ENCODE measurements at regions of chr4 and their contacts with region 1.

Region 1: DNA sequence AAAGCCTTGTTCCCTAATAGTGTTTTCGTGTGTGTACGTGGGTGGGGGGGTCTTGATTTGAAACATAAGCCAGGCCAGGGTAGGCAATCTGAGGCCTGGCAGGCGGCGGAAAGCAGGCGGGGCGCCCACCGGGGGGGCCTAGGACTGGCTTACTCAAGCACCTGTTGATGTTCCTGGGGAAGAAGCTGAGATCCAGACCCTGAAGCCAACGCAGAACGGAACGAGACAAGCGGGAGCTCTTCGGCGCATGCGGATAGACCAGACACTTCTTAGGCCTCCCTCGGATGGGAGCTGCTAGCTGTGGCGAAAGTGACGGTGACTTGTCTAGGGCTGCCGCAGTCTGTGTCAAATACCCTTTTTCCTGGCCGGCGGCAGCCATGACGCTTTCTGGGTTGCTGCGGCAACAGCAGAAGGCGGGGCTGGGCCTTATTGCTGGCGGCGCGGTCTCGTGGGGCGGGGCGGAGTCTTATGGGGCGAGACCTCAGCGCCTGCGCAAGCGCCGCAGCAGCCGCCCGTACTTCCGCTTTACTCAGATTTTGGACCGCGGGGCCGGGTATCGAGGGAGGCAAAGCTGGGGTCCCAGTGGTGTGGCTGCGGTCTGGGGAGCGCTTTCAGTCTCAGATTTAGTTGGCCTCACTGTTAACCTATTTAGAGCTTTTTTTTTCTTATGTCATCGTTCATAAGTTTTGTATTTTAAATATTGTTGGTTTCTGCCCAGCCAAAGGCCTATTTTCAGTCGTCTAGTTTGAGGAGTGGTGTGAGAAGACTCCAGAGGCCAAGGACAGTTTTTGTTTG is at the start of gene SPATA4:
- DNase-seq: peak; percentile 96
- H3K4me3 Mint-ChIP-seq: peak within 1 kb of the TSS; percentile 76
- H3K27ac Mint-ChIP-seq: peak within 1 kb of the TSS; percentile 75
- H3K4me1 Mint-ChIP-seq: peaks cover 32% of the 10 kb centered on the region
- H3K27me3 Mint-ChIP-seq: peaks cover 12% of the 10 kb centered on the region
- total RNA-seq, gene SPATA4: not detected

Region 2: DNA sequence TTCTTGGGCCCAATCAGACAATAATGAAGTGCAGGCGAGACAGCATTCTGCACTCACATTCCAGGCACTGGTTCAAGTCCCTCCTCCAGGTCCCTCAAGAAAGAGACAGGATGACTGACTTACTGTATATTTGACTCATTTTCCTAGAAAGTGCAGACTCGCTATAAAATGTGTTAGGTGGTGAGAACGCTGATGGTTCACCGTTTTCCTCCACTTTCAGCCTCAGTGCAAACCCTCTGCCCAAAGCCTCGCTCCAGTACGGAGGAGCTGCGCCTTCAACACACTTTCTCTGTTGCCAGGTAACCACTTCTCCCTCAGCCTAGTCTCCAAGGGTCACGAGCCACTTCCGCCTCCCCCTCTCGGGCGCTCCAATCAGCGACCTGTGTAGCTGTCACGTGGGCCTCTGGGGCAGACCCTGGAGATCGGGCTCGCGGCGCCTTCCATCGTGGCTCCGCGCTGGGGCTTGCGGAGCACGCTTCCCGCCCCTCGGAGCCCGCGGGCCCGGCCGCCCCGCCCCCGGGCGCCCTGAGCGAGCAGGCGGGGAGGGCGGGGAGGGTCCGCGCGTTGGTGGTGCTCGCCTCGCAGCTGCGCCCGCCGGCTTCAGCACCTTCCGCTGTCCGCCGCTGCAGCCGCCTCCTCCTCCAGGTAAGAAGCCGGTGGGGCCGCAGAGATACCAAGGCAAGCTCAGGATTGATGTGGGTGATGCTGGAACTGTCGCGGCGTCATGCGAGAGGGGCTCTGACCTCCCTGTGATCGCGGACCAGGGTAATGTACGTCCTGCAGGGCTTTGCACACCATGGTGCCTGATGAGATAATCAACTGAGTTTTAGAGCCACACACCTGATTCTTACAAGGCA is 129.7 kb before region 1 on chr4 and contains the start of gene WDR17:
- CTCF ChIA-PET with region 1: no interaction called
- intact Hi-C with region 1: loop called (anchors 1 kb)
- DNase-seq: peak; percentile 80
- H3K4me3 Mint-ChIP-seq: peak within 1 kb of the TSS; percentile 86
- H3K27ac Mint-ChIP-seq: no peak within 1 kb of the TSS
- H3K4me1 Mint-ChIP-seq: peaks cover 11% of the 10 kb centered on the region
- H3K27me3 Mint-ChIP-seq: peaks cover 20% of the 10 kb centered on the region
- total RNA-seq, gene WDR17: 1.4 to 1.7 TPM

Region 3: GRCh38 chr4:176150356-176150682 is 45.1 kb before region 1 on chr4:
- CTCF ChIA-PET with region 1: no interaction called
- intact Hi-C with region 1: loop called (anchors 1 kb)
- DNase-seq: peak; percentile 6
- H3K4me3 Mint-ChIP-seq: no peak overlapping the region
- H3K27ac Mint-ChIP-seq: no peak overlapping the region
- H3K4me1 Mint-ChIP-seq: no peaks in the 10 kb centered on the region
- H3K27me3 Mint-ChIP-seq: no peaks in the 10 kb centered on the region

Region 4: GRCh38 chr4:176492646-176493302 is 297.4 kb after region 1 on chr4:
- CTCF ChIA-PET with region 1: no interaction called
- intact Hi-C with region 1: loop called (anchors 5 kb)
- DNase-seq: no peak
- H3K4me3 Mint-ChIP-seq: no peak overlapping the region
- H3K27ac Mint-ChIP-seq: no peak overlapping the region
- H3K4me1 Mint-ChIP-seq: peaks cover 5% of the 10 kb centered on the region
- H3K27me3 Mint-ChIP-seq: no peaks in the 10 kb centered on the region

Region 5: DNA sequence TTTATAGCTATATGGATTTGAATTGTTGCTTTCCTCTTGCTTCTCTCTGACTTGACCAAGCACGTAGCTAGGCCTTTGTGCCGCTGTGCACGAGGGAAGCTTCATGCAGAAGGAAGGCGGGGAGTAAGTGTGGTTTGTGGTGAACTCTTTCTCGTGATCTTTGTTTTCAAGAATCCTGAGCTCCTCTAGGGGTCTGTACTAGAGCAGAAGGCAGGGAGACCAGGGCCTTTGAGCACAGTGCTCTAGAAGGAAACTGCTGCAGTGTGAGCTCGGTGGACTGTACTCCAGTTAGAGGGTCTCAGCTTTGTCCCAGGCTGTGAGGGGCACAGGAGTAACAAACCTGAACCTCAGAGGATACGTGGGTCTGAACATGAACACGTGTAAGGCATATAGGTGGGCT is 1197.9 kb after region 1 on chr4:
- CTCF ChIA-PET with region 1: no interaction called
- intact Hi-C with region 1: loop called (anchors 2 kb)
- DNase-seq: peak; percentile 31
- H3K4me3 Mint-ChIP-seq: no peak overlapping the region
- H3K27ac Mint-ChIP-seq: no peak overlapping the region
- H3K4me1 Mint-ChIP-seq: peaks cover 33% of the 10 kb centered on the region
- H3K27me3 Mint-ChIP-seq: no peaks in the 10 kb centered on the region

Region 6: GRCh38 chr4:177441803-177442622 is 1246.6 kb after region 1 on chr4 and contains the start of gene AGA:
- CTCF ChIA-PET with region 1: no interaction called
- intact Hi-C with region 1: loop called (anchors 1 kb)
- DNase-seq: peak; percentile 98
- H3K4me3 Mint-ChIP-seq: peak within 1 kb of the TSS; percentile 93
- H3K27ac Mint-ChIP-seq: peak within 1 kb of the TSS; percentile 96
- H3K4me1 Mint-ChIP-seq: peaks cover 25% of the 10 kb centered on the region
- H3K27me3 Mint-ChIP-seq: no peaks in the 10 kb centered on the region
- total RNA-seq, gene AGA: 14.4 to 18.0 TPM

Measured in activated naive CD4-positive, alpha-beta T cell treated with anti-CD3 and anti-CD28 coated beads for 36 hours (primary cell).